MCF 10A (cell line): ENCODE measurements at regions of chr11 and their contacts with region 1.

Region 1: DNA sequence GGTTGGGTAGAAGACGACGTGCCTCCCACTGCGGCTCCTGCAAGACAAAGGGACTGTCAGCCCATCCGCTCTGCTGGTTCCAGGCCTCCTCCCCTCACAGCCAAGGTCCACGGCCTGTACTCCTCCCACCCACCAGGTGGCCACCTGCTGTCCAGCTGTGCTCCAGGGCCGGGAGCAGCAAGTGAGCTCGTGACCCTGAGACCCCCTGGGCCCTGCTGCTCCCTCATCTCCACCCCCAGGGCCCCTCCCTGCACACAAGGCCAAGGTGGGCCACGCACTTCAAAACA is 27.4 kb downstream of the TSPAN4 start:
- DNase-seq: no peak
- H3K4me3 Mint-ChIP-seq: no peak overlapping the region
- H3K27ac Mint-ChIP-seq: no peak overlapping the region
- H3K4me1 Mint-ChIP-seq: no peaks in the 10 kb centered on the region
- H3K27me3 Mint-ChIP-seq: no peaks in the 10 kb centered on the region
- CTCF ChIP-seq: peak; percentile 9

Region 2: GRCh38 chr11:848380-848931 is 21.6 kb before region 1 on chr11:
- CTCF ChIA-PET with region 1: no interaction called
- POLR2A ChIA-PET with region 1: interaction called, 14 read pairs
- intact Hi-C with region 1: no loop called
- DNase-seq: peak; percentile 40
- H3K4me3 Mint-ChIP-seq: no peak overlapping the region
- H3K27ac Mint-ChIP-seq: no peak overlapping the region
- H3K4me1 Mint-ChIP-seq: peaks cover 15% of the 10 kb centered on the region
- H3K27me3 Mint-ChIP-seq: no peaks in the 10 kb centered on the region
- CTCF ChIP-seq: peak; percentile 87

Region 3: GRCh38 chr11:882596-882995 is 12.5 kb after region 1 on chr11:
- CTCF ChIA-PET with region 1: no interaction called
- POLR2A ChIA-PET with region 1: no interaction called
- intact Hi-C with region 1: no loop called
- DNase-seq: no peak
- H3K4me3 Mint-ChIP-seq: no peak overlapping the region
- H3K27ac Mint-ChIP-seq: no peak overlapping the region
- H3K4me1 Mint-ChIP-seq: no peaks in the 10 kb centered on the region
- H3K27me3 Mint-ChIP-seq: no peaks in the 10 kb centered on the region
- CTCF ChIP-seq: no peak